MCF 10A (cell line): ENCODE measurements at regions of chr13 and their contacts with region 1.

Region 1: DNA sequence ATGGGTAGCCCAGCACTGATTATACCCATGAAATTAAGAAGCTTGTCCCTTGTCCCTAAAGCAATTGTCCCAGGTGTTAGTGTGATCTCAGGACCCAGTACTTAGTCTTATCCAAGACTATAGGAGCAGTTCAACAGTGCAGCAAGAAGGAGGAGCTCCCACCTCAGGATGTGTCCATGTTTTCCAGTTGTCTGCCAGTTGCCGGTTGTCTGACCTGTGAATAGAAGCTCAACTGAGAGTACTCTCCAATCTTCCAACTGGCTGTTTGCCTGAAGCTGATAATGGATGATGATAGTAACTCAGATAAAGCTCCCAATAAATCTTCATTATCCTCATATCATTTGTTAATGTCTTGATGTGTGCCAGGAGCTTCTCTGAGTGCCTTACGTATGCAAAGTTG is 107.2 kb upstream of the HTR2A start:
- DNase-seq: peak; percentile 5
- H3K4me3 Mint-ChIP-seq: no peak overlapping the region
- H3K27ac Mint-ChIP-seq: no peak overlapping the region
- H3K4me1 Mint-ChIP-seq: no peaks in the 10 kb centered on the region
- H3K27me3 Mint-ChIP-seq: peaks cover 10% of the 10 kb centered on the region
- CTCF ChIP-seq: no peak

Region 2: GRCh38 chr13:47426126-47426849 is 422.3 kb after region 1 on chr13:
- CTCF ChIA-PET with region 1: no interaction called
- POLR2A ChIA-PET with region 1: interaction called, 10 read pairs
- intact Hi-C with region 1: no loop called
- DNase-seq: peak; percentile 85
- H3K4me3 Mint-ChIP-seq: no peak overlapping the region
- H3K27ac Mint-ChIP-seq: no peak overlapping the region
- H3K4me1 Mint-ChIP-seq: no peaks in the 10 kb centered on the region
- H3K27me3 Mint-ChIP-seq: no peaks in the 10 kb centered on the region
- CTCF ChIP-seq: no peak